ENCODE measurements at regions of chr3 and their contacts with region 1.

Region 1: GRCh38 chr3:14548321-14548729 is 8.2 kb upstream of the GRIP2 start:
- DNase-seq: peak; percentile 86
- H3K4me3 ChIP-seq: no peak overlapping the region
- H3K27ac ChIP-seq: peak overlapping the region in 1 of 2 donors; percentile 15
- H3K4me1 ChIP-seq: no peaks in the 10 kb centered on the region
- H3K27me3 ChIP-seq: no peaks in the 10 kb centered on the region
- CTCF ChIP-seq: peak; percentile 52 to 65 (median 60)
- POLR2A ChIP-seq: no peak

Region 2: GRCh38 chr3:14402304-14402811 is 146.0 kb before region 1 on chr3 and contains the start of gene SLC6A6:
- intact Hi-C with region 1: no loop called
- DNase-seq: peak; percentile 96
- H3K4me3 ChIP-seq: peak within 1 kb of the TSS; percentile 60 to 67
- H3K27ac ChIP-seq: peak within 1 kb of the TSS; percentile 35 to 73
- H3K4me1 ChIP-seq: peaks cover 9% of the 10 kb centered on the region
- H3K27me3 ChIP-seq: no peaks in the 10 kb centered on the region
- CTCF ChIP-seq: peak in 1 of 3 experiments; percentile 7
- POLR2A ChIP-seq: no peak
- total RNA-seq, gene SLC6A6: 13.7 to 14.9 TPM

Region 3: DNA sequence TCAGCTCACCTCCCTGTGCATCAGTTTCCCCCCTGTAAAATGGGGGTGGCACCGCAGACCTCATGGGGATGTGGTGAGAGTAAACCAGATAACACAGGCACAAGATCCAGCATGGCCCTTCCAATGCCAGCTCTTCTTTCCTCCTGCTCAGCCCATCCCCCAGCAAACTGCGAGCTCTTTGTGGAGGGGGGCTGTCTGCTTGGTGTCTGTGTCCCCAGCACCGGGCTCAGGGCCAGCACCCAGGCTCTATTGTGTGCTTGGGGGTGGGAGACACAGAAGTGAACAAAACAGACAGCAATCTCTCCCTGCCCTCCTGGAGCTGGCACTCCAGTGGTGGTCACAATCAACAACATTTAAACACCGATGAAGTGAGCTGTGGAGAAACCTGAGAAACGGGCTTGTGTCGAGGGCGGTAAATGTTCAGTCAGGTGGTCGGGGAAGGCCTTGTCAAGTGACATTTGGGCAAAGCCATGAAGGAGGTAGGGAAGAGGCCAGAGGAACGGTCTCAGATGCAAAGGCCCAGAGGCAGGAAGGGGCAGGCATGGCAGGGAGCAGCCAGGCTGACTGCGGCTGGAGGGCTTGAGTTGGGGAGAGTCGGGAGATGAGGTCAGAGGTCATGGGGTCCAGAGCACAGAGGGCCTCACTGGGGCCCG is 36.6 kb before region 1 on chr3:
- intact Hi-C with region 1: loop called (anchors 5 kb)
- DNase-seq: no peak
- H3K4me3 ChIP-seq: no peak overlapping the region
- H3K27ac ChIP-seq: no peak overlapping the region
- H3K4me1 ChIP-seq: peaks cover 4% of the 10 kb centered on the region
- H3K27me3 ChIP-seq: no peaks in the 10 kb centered on the region
- CTCF ChIP-seq: no peak
- POLR2A ChIP-seq: no peak

Measured in testis (tissue), 5 donors.